Panc1 (cell line): ENCODE measurements at regions of chr5 and their contacts with region 1.

Region 1: DNA sequence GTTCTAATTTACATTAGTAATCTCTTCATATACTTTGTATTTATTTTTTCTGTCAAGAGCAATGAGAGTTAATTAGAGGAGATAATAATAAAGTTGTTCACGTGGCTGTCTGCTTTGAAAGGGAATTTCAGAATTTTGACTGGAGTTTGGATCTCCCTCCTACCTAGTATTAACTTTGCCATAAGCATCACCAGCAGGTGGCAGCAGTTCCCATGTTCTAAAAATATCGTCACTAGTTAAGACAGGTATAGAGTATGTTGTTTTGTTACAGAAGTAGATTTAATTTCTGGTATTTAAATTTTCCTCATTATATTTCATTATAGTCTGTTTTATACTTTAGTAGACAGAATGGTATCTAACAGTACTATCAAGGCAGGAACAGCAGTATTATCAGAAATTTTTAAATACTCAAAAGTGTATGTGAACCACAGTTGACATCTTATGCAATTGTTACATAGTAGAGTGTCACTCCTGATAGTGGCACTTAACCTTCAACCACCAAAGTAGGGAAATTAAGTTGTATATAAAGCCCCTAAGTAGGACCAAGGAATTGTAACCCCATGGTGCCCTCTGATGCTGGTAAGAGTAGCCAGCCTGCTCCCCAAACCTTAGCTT is 20.4 kb downstream of the GNPDA1 start:
- DNase-seq: no peak
- ATAC-seq: peak; percentile 92
- H3K4me3 ChIP-seq: no peak overlapping the region
- H3K27ac ChIP-seq: no peak overlapping the region
- H3K4me1 ChIP-seq: no peaks in the 10 kb centered on the region
- H3K27me3 ChIP-seq: no peaks in the 10 kb centered on the region
- CTCF ChIP-seq: peak; percentile 77; the same call in 1 of the 2 replicates

Region 2: DNA sequence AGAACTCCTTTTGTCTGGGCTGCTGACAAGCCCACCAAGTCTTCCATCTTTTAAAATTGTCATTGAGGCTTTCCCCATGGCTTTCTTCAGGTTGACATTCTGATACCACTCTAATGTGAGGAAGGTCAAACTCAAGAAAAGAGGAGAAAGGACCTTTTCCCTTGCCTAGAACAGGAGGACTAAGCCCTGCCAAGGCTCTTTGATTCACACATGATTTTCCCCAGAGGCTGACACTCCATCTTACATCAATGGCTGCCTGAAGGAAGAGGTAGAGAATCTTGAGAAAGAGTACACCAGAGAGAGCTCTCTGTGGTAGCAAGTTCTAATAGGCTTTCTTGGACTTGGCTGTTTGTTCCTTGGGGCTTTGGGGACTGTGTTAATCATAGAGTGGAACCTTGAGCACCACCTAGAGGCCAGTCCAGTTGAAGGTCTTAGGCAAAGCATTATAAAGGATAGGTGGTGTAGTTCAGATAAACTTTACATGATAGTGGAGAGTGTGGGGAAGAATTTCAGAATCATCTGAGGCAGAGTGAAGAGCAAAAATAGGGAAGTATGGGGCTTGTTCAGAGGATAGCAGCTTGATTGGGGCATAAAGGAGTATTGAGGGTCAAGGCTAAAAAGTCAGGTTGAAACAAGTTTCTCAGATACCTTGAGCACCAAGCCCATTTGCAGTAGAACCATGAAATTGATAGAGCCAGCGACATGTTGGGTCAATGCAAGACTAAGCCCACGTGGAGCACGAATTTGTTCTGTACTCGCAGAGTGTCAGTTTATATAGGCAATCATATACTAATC is 152.8 kb after region 1 on chr5:
- CTCF ChIA-PET with region 1: interaction called, 3 read pairs
- POLR2A ChIA-PET with region 1: interaction called, 22 read pairs
- in situ Hi-C with region 1: no loop called
- intact Hi-C with region 1: loop called (anchors 5 kb)
- DNase-seq: peak; percentile 43
- ATAC-seq: peak; percentile 97
- H3K4me3 ChIP-seq: no peak overlapping the region
- H3K27ac ChIP-seq: no peak overlapping the region
- H3K4me1 ChIP-seq: no peaks in the 10 kb centered on the region
- H3K27me3 ChIP-seq: no peaks in the 10 kb centered on the region
- CTCF ChIP-seq: peak; percentile 88